ENCODE measurements at regions of chr1 and their contacts with region 1.

Region 1: GRCh38 chr1:37449936-37450335 is 24.4 kb upstream of the ZC3H12A start:
- DNase-seq: no peak
- H3K4me3 ChIP-seq: no peak overlapping the region
- H3K4me1 ChIP-seq: peaks cover 5% of the 10 kb centered on the region
- H3K27me3 ChIP-seq: peaks cover 6% of the 10 kb centered on the region; the same call in 1 of the 2 replicates

Region 2: DNA sequence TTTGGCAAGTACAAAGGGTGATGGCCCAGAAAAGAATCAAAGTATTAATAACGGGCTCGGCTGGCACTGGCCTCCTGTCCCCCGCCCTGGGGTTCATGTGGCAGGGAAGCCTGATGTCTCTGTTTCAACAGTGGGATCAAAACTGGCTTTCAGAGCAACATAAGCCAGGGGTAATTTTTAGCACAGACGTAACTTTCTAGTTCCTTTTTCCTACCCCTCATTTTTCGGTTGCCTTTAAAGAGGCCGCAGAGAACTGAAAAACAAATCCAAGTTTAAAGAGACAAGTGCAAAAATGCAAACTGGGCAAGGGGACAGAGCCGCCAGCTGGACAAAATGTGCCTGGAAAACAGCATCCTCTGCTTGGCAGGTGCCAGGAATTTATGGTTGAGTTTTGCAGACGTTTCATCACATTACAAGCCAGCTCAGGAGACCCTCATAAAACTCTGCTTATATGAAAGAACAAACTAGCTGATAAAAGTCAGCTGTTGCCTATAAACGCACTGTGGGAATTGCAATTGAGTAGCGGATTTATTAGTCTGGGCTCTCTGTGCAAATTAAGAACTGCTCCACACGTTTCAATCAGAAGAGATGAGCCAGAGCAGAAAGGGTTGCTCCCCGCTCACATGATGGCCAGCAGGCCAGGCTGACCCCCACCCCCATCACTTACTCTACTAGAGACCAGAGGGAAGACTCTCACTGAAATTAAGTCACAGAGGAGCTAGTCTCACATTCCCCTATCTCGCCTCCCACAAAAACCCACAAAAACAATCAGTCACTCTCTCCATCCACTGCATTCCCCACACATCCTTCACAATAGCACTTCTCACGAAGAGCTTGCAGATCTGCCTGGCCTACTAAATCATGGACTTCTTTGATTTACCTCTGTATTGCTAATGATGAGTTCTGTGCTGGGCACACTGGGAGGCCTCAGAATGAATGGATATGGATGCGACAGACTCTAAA is 226.6 kb after region 1 on chr1:
- in situ Hi-C with region 1: loop called (anchors 10 kb)
- DNase-seq: no peak
- H3K4me3 ChIP-seq: no peak overlapping the region
- H3K4me1 ChIP-seq: no peaks in the 10 kb centered on the region
- H3K27me3 ChIP-seq: peaks cover 12% of the 10 kb centered on the region; the same call in 1 of the 2 replicates

Measured in HAP-1 (cell line).